MCF 10A (cell line): ENCODE measurements at regions of chr14 and their contacts with region 1.

Region 1: DNA sequence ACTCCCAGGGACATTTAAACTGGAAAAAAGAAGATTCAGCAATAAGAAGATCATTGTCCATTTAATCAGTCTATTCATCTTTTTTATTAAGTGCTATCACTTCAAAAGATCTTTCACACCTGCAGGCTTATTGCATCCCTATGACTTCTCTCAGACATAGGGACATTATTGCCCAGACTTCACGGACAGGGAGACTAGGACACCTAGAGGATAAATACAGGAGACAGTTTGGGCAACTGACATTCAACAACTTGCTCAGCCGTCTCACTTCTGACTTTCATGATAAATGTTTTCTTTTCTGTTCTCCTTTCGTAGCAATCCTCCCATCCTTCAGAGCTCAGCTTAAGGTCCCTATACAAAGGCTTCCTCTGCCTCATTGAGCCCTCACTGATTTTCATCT is 84.3 kb downstream of the TMEM30B start:
- DNase-seq: peak; percentile 59
- H3K4me3 Mint-ChIP-seq: no peak overlapping the region
- H3K27ac Mint-ChIP-seq: no peak overlapping the region
- H3K4me1 Mint-ChIP-seq: no peaks in the 10 kb centered on the region
- H3K27me3 Mint-ChIP-seq: no peaks in the 10 kb centered on the region
- CTCF ChIP-seq: peak; percentile 40

Region 2: GRCh38 chr14:60656686-60657455 is 539.9 kb before region 1 on chr14:
- CTCF ChIA-PET with region 1: no interaction called
- POLR2A ChIA-PET with region 1: no interaction called
- intact Hi-C with region 1: loop called (anchors 10 kb)
- DNase-seq: peak; percentile 33
- H3K4me3 Mint-ChIP-seq: peak overlapping the region; percentile 86
- H3K27ac Mint-ChIP-seq: peak overlapping the region; percentile 94
- H3K4me1 Mint-ChIP-seq: no peaks in the 10 kb centered on the region
- H3K27me3 Mint-ChIP-seq: peaks cover 12% of the 10 kb centered on the region
- CTCF ChIP-seq: peak; percentile 39

Region 3: DNA sequence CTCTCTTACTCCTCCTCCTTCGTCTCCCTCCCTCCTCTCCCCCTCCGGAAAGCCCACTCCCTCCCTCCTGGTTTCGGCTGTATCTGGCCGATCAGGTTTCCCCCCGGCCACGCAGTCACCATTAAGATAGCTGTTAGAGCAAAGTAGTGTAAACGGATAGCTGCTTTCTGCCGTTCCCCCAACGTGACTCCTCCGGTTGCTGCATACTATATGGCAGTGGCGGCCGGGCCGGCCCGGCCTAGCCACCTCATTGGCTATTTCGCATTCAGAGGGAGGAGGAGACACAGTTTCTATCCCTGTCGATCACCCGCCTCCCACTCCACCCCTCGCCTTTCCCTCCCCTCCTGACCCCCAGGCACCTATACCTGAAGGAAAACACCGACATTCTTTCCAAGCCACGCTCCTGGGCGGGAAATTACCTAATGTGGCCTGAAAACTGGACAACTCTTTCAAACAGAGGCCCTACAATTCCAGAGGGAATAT is 472.6 kb before region 1 on chr14 and contains the start of gene SIX4:
- CTCF ChIA-PET with region 1: no interaction called
- POLR2A ChIA-PET with region 1: no interaction called
- intact Hi-C with region 1: loop called (anchors 5 kb)
- DNase-seq: peak; percentile 89
- H3K4me3 Mint-ChIP-seq: peak within 1 kb of the TSS; percentile 91
- H3K27ac Mint-ChIP-seq: peak within 1 kb of the TSS; percentile 80
- H3K4me1 Mint-ChIP-seq: no peaks in the 10 kb centered on the region
- H3K27me3 Mint-ChIP-seq: no peaks in the 10 kb centered on the region
- CTCF ChIP-seq: no peak
- total RNA-seq, gene SIX4: 12.9 and 13.6 TPM in 2 replicates

Region 4: DNA sequence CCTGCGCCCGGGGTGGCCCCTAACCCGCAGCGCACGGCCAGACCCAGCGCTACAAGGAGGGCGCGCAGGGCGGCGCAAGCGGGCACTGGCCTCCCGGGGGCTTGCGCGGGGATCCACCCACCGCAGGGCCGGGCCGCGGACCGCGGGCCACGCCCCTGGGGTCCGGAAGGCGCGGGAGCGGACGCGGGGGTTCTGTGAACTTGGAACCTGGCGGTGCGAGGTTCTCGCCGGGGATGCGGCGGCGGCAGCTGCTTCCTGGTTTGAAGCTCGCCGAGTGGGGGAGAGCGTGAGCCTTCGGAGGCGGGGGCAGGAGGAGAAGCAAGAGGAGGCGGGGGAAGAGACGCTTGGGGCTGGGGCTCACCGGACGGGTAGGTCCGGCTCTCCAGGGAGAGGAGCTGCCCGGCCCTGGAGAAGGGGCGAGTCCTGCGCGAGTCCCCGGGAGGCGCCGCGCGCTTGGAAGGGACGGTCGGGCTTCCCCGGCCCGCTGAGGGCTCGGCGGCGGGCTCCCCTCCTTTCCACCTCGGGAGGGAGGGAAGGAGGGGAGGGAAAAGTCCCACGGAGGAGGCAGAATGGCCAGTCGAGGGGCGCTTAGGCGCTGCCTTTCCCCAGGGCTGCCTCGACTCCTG is 124.7 kb after region 1 on chr14 and contains the start of gene PRKCH:
- CTCF ChIA-PET with region 1: no interaction called
- POLR2A ChIA-PET with region 1: no interaction called
- intact Hi-C with region 1: no loop called
- DNase-seq: peak; percentile 78
- H3K4me3 Mint-ChIP-seq: peak within 1 kb of the TSS; percentile 94
- H3K27ac Mint-ChIP-seq: peak within 1 kb of the TSS; percentile 98
- H3K4me1 Mint-ChIP-seq: peaks cover 15% of the 10 kb centered on the region
- H3K27me3 Mint-ChIP-seq: no peaks in the 10 kb centered on the region
- CTCF ChIP-seq: no peak
- total RNA-seq, gene PRKCH: 10.4 and 12.4 TPM in 2 replicates